ENCODE measurements at regions of chr4 and their contacts with region 1.

Region 1: DNA sequence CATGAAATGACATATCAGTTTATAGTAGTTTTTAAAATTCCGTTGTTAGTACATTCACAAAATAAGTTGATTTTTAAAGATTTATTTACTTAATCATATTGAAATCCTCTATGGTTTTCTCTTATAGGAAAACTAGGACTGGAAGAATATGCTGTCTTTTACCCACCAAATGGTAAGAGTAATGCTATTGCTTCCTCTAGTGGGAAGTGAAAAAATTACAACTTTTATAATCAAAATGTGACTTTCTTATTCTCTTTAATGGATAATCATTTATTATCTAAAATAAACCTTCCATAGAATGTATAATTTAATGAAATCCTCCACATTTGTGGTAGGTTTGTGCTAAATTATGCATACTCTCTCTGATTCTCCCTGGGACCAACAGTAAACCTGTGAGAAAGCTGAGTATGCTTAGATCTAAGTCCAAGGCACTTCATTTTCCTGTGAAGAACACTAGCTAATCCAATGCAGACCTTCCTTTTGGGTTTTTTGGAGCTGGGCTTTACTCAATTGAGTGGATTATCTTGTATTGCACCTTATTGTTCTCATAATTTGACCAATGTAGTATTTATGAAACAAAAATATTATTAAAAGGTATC is 136.2 kb downstream of the TBC1D19 start:
- DNase-seq: no peak
- ATAC-seq: no peak
- H3K4me3 Mint-ChIP-seq: no peak overlapping the region
- H3K27ac Mint-ChIP-seq: no peak overlapping the region
- H3K4me1 Mint-ChIP-seq: peaks cover 20% of the 10 kb centered on the region
- H3K27me3 Mint-ChIP-seq: no peaks in the 10 kb centered on the region

Region 2: DNA sequence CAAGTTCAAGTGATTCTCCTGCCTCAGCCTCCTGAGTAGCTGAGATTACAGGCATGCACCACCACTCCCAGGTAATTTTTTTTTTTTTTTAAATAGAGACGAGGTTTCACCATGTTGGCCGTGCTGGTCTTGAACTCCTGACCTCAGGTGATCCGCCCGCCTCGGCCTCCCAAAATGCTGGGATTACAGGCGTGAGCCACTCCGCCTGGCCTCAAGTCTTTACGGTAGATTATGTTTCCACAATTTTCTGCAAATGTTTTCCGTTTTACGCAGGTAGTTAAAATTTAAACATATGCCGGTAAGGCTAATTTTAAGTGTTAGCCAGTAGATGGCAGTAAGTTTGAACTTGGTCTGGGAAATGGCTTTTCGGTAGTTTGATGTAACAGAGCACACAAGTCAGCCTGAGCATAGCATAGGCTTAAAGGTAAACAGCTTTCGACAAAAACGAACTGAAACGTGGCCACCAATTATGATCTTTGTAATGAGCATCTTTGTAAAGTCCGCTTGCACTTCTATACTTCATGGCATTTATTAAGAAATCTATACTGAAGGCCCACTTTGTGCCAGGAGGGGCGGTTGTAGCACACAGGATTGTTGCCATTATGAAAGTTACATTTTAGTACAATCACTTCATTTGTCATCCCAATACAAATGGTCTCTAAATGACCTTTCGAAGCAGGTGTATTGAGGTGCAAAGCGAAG is 260.8 kb before region 1 on chr4:
- CTCF ChIA-PET with region 1: interaction called, 24 read pairs
- POLR2A ChIA-PET with region 1: no interaction called
- DNase-seq: no peak
- ATAC-seq: peak; percentile 55
- H3K4me3 Mint-ChIP-seq: peak overlapping the region; percentile 41
- H3K27ac Mint-ChIP-seq: peak overlapping the region; percentile 9
- H3K4me1 Mint-ChIP-seq: peaks cover 20% of the 10 kb centered on the region
- H3K27me3 Mint-ChIP-seq: no peaks in the 10 kb centered on the region

Region 3: GRCh38 chr4:26590639-26591038 is 129.4 kb before region 1 on chr4:
- CTCF ChIA-PET with region 1: no interaction called
- POLR2A ChIA-PET with region 1: no interaction called
- DNase-seq: no peak
- ATAC-seq: no peak
- H3K4me3 Mint-ChIP-seq: no peak overlapping the region
- H3K27ac Mint-ChIP-seq: no peak overlapping the region
- H3K4me1 Mint-ChIP-seq: peaks cover 14% of the 10 kb centered on the region
- H3K27me3 Mint-ChIP-seq: no peaks in the 10 kb centered on the region

Region 4: GRCh38 chr4:27010334-27010940 is 290.4 kb after region 1 on chr4:
- CTCF ChIA-PET with region 1: interaction called, 21 read pairs
- POLR2A ChIA-PET with region 1: no interaction called
- DNase-seq: peak; percentile 71
- ATAC-seq: no peak
- H3K4me3 Mint-ChIP-seq: no peak overlapping the region
- H3K27ac Mint-ChIP-seq: no peak overlapping the region
- H3K4me1 Mint-ChIP-seq: peaks cover 5% of the 10 kb centered on the region
- H3K27me3 Mint-ChIP-seq: no peaks in the 10 kb centered on the region